Colonic mucosa (tissue), 4 donors: ENCODE measurements at regions of chr6 and their contacts with region 1.

Region 1: GRCh38 chr6:2353412-2354137 is 108.2 kb upstream of the GMDS start:
- DNase-seq: peak; percentile 83
- H3K4me3 ChIP-seq: no peak overlapping the region
- H3K27ac ChIP-seq: no peak overlapping the region
- H3K4me1 ChIP-seq: peaks cover 3% of the 10 kb centered on the region
- H3K27me3 ChIP-seq: no peaks in the 10 kb centered on the region
- CTCF ChIP-seq: peak; percentile 60

Region 2: GRCh38 chr6:1604158-1605030 is 749.2 kb before region 1 on chr6:
- intact Hi-C with region 1: loop called (anchors 5 kb)
- DNase-seq: peak; percentile 61
- H3K4me3 ChIP-seq: peak overlapping the region; percentile 48
- H3K27ac ChIP-seq: no peak overlapping the region
- H3K4me1 ChIP-seq: peaks cover 20% of the 10 kb centered on the region
- H3K27me3 ChIP-seq: peaks cover 94% of the 10 kb centered on the region
- CTCF ChIP-seq: peak; percentile 98

Region 3: DNA sequence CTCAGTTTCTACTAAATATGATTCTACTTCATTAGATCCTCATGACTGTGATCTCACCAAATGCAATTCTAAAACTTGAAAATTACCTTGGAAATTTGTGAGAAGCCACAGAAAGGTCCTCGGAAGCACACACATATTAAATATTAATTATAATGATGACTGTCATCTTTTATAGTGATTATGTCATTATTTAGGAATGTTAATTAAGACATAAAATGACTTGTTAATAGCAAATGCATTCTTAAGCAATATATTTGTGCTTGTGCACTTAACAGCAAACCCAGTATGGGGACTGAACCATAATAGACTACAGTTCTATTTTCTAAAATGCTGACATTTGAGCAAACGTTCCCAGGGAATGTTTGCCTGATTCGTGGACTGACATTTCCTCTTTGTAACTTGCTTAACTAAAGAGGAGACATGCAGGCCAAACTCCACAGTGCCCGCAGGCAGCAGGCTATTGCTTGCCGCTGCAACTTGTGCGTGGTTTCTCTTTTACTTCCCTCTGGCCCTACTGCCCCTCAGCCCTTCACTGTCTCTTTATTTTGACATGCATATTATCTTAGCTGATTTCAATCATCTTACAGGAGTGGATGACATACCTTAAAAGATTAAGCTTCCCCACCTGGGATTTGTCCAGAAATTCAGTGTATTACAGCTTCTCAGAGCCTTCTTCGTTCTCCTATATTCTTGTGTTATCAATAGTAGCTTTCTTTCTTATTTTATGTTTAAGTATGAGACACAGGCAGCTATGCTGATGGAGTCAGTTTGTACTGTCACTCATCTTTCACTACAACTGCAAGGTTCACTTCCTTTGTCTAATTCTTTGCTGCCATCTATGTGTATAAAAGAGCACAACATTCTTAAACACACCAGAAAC is 249.7 kb before region 1 on chr6:
- intact Hi-C with region 1: no loop called
- DNase-seq: no peak
- H3K4me3 ChIP-seq: no peak overlapping the region
- H3K27ac ChIP-seq: no peak overlapping the region
- H3K4me1 ChIP-seq: no peaks in the 10 kb centered on the region
- H3K27me3 ChIP-seq: no peaks in the 10 kb centered on the region
- CTCF ChIP-seq: no peak

Region 4: GRCh38 chr6:2209226-2209809 is 144.3 kb before region 1 on chr6:
- intact Hi-C with region 1: loop called (anchors 5 kb)
- DNase-seq: peak; percentile 70
- H3K4me3 ChIP-seq: no peak overlapping the region
- H3K27ac ChIP-seq: no peak overlapping the region
- H3K4me1 ChIP-seq: no peaks in the 10 kb centered on the region
- H3K27me3 ChIP-seq: no peaks in the 10 kb centered on the region
- CTCF ChIP-seq: peak; percentile 43

Region 5: DNA sequence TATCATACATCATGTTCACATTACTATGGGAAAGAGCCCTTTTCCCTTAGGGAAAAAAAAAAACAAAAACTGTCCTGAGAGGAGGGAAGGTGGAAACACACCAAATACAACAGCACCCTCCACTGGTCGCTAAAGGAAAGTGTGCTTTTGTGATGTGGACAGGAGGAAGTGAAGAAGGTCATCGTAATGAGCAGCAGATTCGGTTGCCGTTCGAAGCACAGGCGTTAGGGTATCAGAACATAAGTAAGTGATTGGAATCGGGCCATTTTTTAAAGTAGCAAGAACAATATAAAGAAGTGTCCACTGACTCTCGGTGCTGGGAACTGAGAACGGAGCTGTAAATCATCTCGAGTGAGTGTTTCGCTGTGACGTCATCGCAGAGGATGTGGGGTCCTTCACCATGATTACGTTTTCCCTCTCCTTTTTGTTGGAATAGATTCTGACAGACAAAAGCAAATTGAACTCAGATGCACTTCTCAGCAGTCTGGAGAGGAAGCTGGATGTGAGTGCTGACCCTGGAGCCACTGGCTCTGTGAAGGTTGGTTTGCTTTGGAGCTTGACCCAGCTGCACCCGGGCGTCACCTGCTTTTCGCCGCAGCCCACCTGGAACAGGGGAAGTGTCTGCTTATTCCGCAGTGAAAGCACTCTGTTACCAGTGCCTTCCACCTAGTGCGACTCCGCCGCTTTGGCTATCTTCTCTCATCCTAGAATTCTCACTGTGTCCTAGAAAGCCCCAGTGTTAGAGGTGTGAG is 95.4 kb after region 1 on chr6:
- intact Hi-C with region 1: loop called (anchors 10 kb)
- DNase-seq: peak; percentile 61
- H3K4me3 ChIP-seq: no peak overlapping the region
- H3K27ac ChIP-seq: no peak overlapping the region
- H3K4me1 ChIP-seq: peaks cover 10% of the 10 kb centered on the region
- H3K27me3 ChIP-seq: no peaks in the 10 kb centered on the region
- CTCF ChIP-seq: peak; percentile 49

Region 6: DNA sequence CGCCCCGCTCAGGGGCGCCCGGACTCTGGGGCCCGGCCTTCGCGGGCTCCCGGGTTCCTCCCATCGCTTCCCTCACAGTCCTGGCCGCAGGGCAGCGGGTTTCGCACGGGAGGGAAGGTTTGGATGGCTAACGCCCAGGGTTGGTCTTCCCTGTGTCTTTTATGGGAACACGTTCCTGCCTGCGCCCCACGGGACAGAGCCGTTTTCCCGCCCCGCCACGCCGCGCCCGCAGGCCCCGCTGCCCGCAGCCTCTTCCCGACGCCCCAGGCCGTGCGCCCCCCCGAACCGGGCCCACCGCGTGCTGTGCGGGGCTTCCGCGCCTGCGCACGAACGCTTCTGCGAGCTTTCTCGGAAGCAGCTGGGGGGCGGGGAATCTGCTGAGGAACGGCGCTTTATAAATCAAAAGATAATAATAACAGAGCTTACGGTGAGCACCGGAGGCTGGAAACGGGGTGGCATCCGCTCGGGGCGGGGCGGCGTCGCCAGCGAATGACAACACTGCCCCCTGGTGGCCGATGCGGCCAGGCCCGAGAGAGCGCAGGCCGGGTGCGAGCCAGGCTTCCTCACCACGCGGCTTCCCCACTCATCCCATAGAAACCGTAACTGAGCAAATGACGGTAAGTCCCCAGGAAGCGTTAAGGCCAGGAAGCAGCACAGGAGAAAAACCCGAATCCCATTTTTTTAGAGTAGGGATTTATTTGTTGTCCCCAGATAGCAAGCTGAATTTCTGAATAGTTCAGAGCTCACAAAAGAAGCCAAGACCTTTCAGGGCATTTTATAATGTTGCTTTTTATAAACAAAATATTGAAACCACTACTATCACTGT is 280.8 kb after region 1 on chr6:
- intact Hi-C with region 1: loop called (anchors 10 kb)
- DNase-seq: peak; percentile 88
- H3K4me3 ChIP-seq: peak overlapping the region; percentile 46
- H3K27ac ChIP-seq: no peak overlapping the region
- H3K4me1 ChIP-seq: no peaks in the 10 kb centered on the region
- H3K27me3 ChIP-seq: no peaks in the 10 kb centered on the region
- CTCF ChIP-seq: peak; percentile 99